ENCODE measurements at regions of chr2 and their contacts with region 1.

Region 1: DNA sequence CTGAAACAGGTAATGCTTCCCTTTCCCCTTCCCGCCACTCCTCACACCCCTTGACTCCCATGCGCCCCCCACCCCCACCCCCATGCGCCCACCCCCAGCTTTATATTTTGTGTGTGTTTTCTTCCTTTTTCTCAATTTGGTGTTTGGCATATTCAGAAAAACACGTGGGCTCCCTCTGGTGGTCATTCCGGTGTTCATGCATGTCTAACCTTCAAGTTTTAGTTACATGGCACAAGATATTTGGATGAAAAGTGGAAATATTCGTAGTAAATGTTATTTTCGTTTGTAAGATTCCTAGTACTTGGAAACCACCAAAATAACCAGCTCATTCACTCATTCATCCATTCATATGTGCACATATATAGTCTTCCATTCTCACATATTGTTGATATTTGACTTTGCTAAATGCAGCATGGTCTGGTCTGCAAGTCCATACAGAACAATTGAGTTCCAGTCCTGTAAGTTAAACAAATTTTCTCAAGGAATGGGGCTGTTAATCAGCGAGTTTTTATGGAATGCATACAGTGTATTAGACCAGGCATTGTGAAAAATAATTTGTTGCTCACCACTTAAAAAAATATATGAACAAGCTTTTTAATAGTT is 143.6 kb upstream of the MAP3K20 start:
- DNase-seq: no peak
- H3K4me3 ChIP-seq: peak overlapping the region; percentile 31 to 46 (median 36)
- H3K27ac ChIP-seq: peak overlapping the region; percentile 45 to 71 (median 64)
- H3K4me1 ChIP-seq: peaks cover 39 to 50% (median 44%) of the 10 kb centered on the region in 4 donors
- H3K27me3 ChIP-seq: no peaks in the 10 kb centered on the region
- CTCF ChIP-seq: peak; percentile 59 to 76 (median 76)
- EP300 ChIP-seq: no peak
- POLR2A ChIP-seq: no peak

Region 2: DNA sequence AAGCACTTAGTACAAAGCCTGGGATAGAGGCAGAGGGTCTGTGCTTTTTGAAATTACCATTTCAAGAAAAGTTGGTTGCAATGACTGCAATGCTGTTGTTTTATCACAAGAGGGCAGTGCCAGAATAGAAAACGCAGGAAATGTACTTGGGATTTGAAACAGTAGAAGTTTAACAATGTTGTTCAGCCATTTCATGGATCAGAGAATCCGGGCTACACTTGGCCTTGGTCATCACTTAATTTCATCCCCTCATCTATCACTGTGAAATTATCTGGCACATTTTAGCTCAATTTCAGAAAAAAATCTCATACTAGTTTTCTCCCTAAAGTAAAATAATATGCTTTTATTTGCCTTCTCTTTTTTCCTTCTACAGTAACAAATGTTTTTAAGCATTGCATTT is 125.5 kb before region 1 on chr2:
- intact Hi-C with region 1: loop called (anchors 2 kb)
- DNase-seq: no peak
- H3K4me3 ChIP-seq: no peak overlapping the region
- H3K27ac ChIP-seq: no peak overlapping the region
- H3K4me1 ChIP-seq: peaks cover 0 to 8% (median 3%) of the 10 kb centered on the region in 4 donors
- H3K27me3 ChIP-seq: no peaks in the 10 kb centered on the region
- CTCF ChIP-seq: peak; percentile 76 to 88 (median 80)
- EP300 ChIP-seq: no peak
- POLR2A ChIP-seq: no peak

Region 3: DNA sequence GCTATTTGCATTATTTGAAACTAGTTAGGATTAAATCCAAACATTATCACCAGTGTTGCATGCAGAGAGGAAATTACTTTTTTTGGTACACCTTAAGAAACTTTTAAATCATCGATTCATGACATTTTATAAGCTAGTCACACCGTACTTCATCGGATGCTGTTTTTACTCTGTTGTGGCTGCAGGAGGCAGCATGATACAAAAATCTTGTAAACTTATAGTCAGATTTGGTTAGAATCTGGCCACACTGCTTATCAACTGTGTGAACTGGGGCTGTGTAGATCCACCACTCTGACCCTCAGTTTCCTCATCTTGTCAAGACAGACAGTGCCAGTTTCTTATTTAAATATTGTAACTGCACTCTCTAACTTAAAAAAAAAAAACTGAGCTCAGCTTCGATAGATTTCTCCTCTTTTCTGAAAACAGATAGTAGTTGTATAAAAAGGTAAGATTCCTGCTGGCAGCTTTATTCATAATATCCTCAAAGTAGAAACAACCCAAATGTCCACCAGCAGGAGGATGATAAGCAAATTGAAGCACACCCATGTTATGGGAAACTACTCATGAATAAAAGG is 118.6 kb before region 1 on chr2:
- intact Hi-C with region 1: loop called (anchors 2 kb)
- DNase-seq: no peak
- H3K4me3 ChIP-seq: no peak overlapping the region
- H3K27ac ChIP-seq: no peak overlapping the region
- H3K4me1 ChIP-seq: no peaks in the 10 kb centered on the region
- H3K27me3 ChIP-seq: no peaks in the 10 kb centered on the region
- CTCF ChIP-seq: peak in 1 of 3 experiments; percentile 37
- EP300 ChIP-seq: no peak
- POLR2A ChIP-seq: no peak

Region 4: DNA sequence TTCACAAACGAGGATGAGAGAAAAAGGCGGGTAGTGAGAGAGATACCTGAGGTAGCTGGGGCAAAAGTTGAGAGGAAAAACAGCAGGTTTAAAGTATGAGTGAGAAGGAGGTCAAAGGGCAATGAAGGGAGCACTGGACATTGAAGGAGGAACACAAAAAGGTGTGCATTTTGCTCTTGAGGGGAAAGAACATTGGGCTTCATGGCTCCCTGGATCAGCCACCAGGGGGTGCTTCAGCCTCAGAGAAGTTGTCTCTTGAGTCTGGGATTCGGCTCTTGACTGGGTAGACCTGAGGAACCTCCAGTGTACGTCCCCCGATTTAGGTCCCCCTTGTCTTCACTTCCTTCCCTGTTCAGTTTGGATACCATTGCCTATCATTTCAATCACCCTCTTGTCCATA is 67.8 kb before region 1 on chr2:
- intact Hi-C with region 1: loop called (anchors 2 kb)
- DNase-seq: peak; percentile 91
- H3K4me3 ChIP-seq: no peak overlapping the region
- H3K27ac ChIP-seq: no peak overlapping the region
- H3K4me1 ChIP-seq: peaks cover 0 to 22% (median 10%) of the 10 kb centered on the region in 4 donors
- H3K27me3 ChIP-seq: peaks cover 0 to 3% (median 0%) of the 10 kb centered on the region in 4 donors
- CTCF ChIP-seq: peak; percentile 59 to 79 (median 71)
- EP300 ChIP-seq: no peak
- POLR2A ChIP-seq: no peak

Measured in esophagus muscularis mucosa (tissue), 4 donors.